ENCODE measurements at regions of chr10 and their contacts with region 1.

Region 1: DNA sequence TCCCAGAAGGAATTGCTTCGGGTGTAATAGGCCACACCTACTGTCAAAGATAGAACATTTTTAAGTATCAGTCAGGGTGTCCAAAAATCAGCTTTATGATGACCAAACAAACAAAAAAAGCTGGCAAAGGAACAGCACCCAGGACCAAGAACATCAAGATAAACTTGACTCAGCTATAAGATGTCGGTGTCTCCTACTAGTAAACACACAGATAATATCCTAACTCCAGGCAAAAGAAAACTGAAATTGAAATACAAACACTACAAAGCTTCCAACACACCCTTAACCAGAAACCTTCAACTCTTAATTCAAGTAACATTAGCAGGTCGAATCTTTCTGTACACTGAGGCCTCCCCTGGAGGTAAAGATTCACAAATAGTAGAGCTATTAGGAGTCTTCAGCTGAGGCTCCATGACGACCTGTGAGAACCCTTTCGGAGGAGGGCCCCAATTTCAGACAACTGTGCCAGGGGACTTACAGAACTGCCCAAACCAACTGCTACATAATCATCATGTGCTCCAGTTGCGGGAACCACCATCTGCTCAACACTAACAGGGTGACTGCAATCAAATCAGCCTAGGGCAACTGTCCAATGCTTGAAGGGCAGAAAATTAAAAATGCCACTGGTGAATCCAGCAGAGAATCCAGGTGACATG is 20.2 kb downstream of the XPNPEP1 start:
- DNase-seq: no peak
- H3K4me3 Mint-ChIP-seq: peak overlapping the region; percentile 17
- H3K27ac Mint-ChIP-seq: peak overlapping the region; percentile 67
- H3K4me1 Mint-ChIP-seq: peaks cover 42% of the 10 kb centered on the region
- H3K27me3 Mint-ChIP-seq: no peaks in the 10 kb centered on the region

Region 2: DNA sequence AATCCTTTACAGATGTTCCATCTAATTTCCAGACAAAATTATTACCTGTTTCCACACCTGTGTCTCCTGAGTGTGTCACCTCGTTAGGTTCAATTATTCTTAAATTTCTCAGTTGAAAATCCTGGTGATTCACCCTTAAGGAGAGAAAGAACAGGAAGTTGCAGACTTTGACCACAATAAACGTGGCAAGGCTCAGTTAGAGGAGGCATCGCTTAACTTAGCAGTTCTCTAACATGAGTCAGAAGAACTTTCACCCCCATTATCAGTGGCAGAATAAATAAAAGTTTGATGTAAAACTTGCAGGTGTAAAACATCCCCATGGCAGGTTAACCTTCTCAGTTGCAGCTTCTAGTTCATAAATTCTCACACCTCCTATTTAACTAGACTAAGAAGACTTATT is 11.9 kb after region 1 on chr10:
- intact Hi-C with region 1: loop called (anchors 2 kb)
- DNase-seq: no peak
- H3K4me3 Mint-ChIP-seq: no peak overlapping the region
- H3K27ac Mint-ChIP-seq: peak overlapping the region; percentile 78
- H3K4me1 Mint-ChIP-seq: peaks cover 65% of the 10 kb centered on the region
- H3K27me3 Mint-ChIP-seq: no peaks in the 10 kb centered on the region

Region 3: DNA sequence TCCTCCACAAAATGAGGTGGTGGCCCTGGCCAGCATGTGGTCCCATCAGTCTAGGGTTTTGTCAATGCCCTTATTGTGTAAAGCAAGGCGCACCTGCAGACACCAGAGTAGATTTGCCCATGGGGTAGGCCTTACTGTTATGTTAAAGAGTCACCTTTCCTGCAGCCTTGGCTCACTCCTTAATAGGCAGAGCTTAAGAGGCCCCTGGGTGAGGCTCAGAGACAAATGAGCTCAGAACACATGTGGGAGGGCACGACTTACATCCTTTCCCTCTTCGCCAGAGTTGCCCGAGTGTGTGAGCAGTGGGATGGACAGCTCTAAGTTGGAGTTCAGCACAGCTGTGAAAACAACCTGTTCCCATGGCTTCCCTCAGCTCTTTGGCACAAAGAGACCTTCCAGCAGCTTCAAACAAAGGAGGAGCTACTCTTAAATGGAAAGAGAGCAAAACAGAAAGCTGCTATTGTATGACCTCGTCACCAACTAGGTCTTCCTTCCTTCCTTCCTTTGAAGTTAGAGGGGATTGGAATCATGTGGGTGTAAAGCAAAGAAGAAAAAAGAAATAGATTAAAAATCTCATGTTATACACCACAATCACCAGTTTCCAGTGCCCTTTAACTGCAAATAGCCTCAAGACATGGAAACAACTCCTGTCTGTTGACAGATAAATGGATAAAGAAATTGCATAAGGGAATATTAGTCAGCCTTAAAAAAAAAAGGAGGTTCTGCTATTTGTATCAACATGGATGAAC is 32.1 kb after region 1 on chr10:
- intact Hi-C with region 1: loop called (anchors 2 kb)
- DNase-seq: no peak
- H3K4me3 Mint-ChIP-seq: peak overlapping the region; percentile 49
- H3K27ac Mint-ChIP-seq: peak overlapping the region; percentile 82
- H3K4me1 Mint-ChIP-seq: peaks cover 20% of the 10 kb centered on the region
- H3K27me3 Mint-ChIP-seq: peaks cover 11% of the 10 kb centered on the region